ENCODE measurements at regions of chr3 and their contacts with region 1.

Region 1: GRCh38 chr3:119498186-119498987 is at the start of gene TIMMDC1:
- DNase-seq: peak; percentile 96 to 98
- ATAC-seq: peak; percentile 96 to 98
- H3K4me3 ChIP-seq: peak within 1 kb of the TSS; percentile 71 to 93 (median 90)
- H3K27ac ChIP-seq: peak within 1 kb of the TSS; percentile 91 to 98 (median 94)
- H3K4me1 ChIP-seq: peaks cover 29 to 33% of the 10 kb centered on the region in 2 donors
- H3K27me3 ChIP-seq: no peaks in the 10 kb centered on the region
- CTCF ChIP-seq: no peak
- POLR2A ChIP-seq: peak; percentile 72 to 86
- total RNA-seq, gene TIMMDC1: 41.2 to 137 (median 101) TPM

Region 2: DNA sequence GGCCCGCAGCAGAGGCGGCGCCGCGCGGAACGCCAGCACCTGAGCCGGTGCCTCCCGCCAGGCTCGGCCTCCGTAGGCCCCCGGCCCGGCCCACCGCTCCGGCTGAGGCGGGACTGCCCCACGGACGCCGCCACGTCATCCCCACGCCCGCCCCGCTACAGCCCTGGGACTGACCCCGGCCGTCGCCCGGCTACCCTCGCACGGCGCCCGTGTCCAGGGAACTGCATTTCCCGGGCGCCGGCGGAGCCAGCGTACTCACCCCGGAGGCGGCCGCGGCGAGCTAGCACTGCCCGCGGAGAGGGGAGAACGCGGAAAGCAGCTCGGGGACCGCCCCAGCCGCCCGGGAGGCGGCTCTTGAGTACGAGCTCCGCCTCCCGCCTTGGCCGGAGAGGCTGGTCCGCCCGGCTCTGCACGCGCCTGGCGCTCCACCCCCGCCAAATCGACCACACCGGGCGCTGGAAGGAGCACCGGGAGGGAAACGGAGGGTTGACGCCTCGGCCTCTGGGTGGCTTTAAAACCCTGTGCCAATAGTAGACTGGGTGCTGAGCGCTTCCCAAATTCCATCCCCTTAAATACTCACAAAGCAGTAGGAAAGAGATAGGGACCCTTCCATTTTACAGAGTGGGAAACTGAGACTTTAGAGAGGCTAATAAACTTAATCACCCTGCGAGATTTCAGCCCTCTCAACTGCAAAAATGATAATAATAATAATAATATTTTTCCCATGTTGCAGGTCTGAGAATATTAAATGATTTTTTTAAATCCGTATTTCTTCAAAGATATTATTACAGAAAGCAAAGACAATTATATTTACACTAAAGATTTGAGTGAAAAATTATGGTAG is 257.6 kb before region 1 on chr3 and contains the start of gene B4GALT4:
- in situ Hi-C with region 1: no loop called
- intact Hi-C with region 1: loop called (anchors 10 kb)
- DNase-seq: peak; percentile 72 to 74
- ATAC-seq: peak; percentile 89 to 95
- H3K4me3 ChIP-seq: peak within 1 kb of the TSS; percentile 67 to 82 (median 70)
- H3K27ac ChIP-seq: peak within 1 kb of the TSS; percentile 77 to 89 (median 86)
- H3K4me1 ChIP-seq: peaks cover 0 to 22% of the 10 kb centered on the region in 2 donors
- H3K27me3 ChIP-seq: no peaks in the 10 kb centered on the region
- CTCF ChIP-seq: peak in 1 of 5 experiments; percentile 10
- POLR2A ChIP-seq: peak; percentile 71 to 79
- total RNA-seq, gene B4GALT4: 5.7 to 13.4 (median 7.7) TPM

Region 3: DNA sequence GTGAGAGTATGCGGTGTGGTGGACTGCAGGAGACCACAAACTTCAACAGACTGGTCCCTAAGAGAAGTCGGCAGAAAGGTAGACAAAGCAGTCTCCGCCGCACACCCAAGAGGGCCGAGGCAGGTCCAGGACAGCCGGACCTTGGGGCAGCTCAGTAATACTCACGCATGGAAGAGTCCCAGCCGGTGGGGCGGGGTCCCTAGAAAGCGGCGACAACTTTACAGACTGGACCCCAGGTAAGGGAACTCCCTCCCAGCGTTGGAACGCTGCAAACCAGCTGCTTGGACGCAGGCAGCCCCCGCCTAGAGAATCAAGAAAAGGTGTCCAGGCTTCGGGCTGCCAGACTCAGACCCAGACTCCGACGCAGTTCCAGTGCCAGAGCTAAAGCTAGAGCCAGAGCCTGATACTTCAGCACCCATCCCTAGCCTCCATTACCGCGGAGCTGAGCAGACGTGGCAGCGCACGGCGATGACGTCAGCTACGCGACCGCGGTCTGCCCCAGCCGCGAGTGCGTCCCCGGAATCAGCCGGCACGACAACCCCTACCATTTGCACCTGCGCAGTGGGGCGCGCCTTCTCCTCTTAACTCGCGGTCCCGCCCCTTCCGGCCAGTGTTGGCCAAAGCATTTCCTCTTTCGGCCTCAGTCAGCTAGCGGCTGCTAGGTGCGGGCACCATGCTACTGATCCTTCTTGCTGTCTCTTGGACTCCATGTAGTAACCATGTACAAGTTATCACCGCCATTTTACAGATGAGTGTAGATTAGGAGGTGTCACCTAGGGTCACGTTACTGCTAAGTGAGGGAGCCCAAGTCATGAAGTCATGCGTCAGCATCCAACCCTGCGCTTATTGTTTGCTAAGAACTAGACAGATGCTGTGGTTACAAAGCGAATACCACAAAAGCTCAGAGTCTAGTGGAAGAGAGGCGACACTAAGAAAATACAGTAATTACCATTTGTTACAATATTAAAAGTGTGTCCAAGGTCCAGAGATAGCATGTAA is 34.9 kb before region 1 on chr3 and contains the start of gene TMEM39A:
- in situ Hi-C with region 1: no loop called
- intact Hi-C with region 1: loop called (anchors 1 kb)
- DNase-seq: peak; percentile 98 to 99
- ATAC-seq: peak; percentile 97 to 98
- H3K4me3 ChIP-seq: peak within 1 kb of the TSS; percentile 88 to 99 (median 94)
- H3K27ac ChIP-seq: peak within 1 kb of the TSS; percentile 80 to 92 (median 83)
- H3K4me1 ChIP-seq: peaks cover 21 to 27% of the 10 kb centered on the region in 2 donors
- H3K27me3 ChIP-seq: no peaks in the 10 kb centered on the region
- CTCF ChIP-seq: peak in 3 of 5 experiments; percentile 23 to 33 (median 32)
- POLR2A ChIP-seq: peak; percentile 80 to 85
- total RNA-seq, gene TMEM39A: 9.0 to 21.2 (median 15.5) TPM

Region 4: DNA sequence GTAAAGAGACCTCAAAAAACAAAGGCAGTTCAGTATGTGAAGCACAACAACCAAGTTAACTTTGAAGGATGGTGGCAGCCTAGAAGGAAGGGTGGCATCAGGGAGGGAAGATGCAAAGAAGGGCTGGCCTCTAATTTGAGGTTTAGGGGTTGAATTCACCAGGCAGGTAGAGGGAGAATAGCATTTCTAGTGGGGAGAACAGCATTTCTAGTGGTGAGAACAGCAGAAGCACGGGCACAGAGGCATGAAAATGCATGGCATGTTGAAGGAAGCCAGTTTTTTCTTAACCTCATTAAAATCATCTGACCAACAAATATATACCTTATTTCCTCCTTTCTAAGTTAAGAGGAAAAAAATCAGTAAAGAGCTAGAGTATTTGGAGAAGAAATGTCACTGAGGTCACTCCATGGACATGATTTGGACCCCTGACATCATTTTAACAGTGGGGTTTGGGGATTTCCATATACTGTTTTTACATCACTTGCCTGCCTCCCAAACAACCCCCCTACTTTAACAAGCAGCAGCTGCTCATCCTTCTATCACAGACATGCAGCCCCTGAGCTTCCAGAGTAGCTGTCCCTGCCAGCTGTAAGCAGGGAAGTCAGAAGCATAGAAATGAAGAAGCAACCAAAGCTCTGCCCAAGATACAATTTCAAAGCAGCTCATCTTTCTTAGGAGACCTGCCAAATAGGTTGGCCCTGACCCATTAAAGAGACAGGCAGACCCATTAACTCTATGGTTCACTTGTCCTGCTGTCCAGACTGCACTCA is 164.4 kb after region 1 on chr3:
- in situ Hi-C with region 1: no loop called
- intact Hi-C with region 1: no loop called
- DNase-seq: peak; percentile 68 to 83
- ATAC-seq: peak; percentile 75 to 77
- H3K4me3 ChIP-seq: no peak overlapping the region
- H3K27ac ChIP-seq: peak overlapping the region; percentile 94 to 96 (median 95)
- H3K4me1 ChIP-seq: peaks cover 50 to 60% of the 10 kb centered on the region in 2 donors
- H3K27me3 ChIP-seq: no peaks in the 10 kb centered on the region
- CTCF ChIP-seq: peak in 4 of 5 experiments; percentile 24 to 57 (median 28)
- POLR2A ChIP-seq: peak; percentile 63 to 84

Measured in gastrocnemius medialis (tissue), 4 donors.